ENCODE measurements at regions of chr1 and their contacts with region 1.

Region 1: DNA sequence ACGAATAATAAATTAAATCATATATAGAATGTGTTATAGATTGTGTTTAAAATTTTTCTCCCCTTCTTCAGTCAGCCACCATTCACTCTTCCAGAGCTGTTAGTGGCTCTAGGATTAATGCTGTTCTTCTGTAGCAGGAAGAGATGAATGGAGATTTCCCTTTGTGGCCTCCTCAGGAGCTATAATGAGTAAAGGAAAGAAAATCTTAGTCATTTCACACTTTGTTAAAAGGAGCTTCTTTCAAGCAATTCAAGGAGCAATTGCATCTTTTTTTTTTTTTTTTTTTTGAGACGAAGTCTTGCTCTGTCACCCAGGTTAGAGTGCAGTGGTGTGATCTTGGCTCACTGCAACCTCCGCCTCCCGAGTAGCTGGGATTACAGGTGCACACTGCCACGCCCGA is 23.7 kb upstream of the TMCO2 start:
- DNase-seq: no peak
- ATAC-seq: no peak
- H3K4me3 ChIP-seq: no peak overlapping the region
- H3K27ac ChIP-seq: no peak overlapping the region
- H3K4me1 ChIP-seq: no peaks in the 10 kb centered on the region
- H3K27me3 ChIP-seq: no peaks in the 10 kb centered on the region
- CTCF ChIP-seq: no peak

Region 2: GRCh38 chr1:39575191-39576015 is 648.6 kb before region 1 on chr1:
- intact Hi-C with region 1: loop called in 1 of 10 experiments (anchors 5 kb)
- DNase-seq: peak; percentile 58 to 73
- ATAC-seq: peak; percentile 43 to 79 (median 68)
- H3K4me3 ChIP-seq: peak overlapping the region; percentile 72 to 94 (median 83)
- H3K27ac ChIP-seq: peak overlapping the region; percentile 63 to 96 (median 94)
- H3K4me1 ChIP-seq: peaks cover 4 to 48% (median 36%) of the 10 kb centered on the region in 9 donors
- H3K27me3 ChIP-seq: no peaks in the 10 kb centered on the region
- CTCF ChIP-seq: no peak

Region 3: DNA sequence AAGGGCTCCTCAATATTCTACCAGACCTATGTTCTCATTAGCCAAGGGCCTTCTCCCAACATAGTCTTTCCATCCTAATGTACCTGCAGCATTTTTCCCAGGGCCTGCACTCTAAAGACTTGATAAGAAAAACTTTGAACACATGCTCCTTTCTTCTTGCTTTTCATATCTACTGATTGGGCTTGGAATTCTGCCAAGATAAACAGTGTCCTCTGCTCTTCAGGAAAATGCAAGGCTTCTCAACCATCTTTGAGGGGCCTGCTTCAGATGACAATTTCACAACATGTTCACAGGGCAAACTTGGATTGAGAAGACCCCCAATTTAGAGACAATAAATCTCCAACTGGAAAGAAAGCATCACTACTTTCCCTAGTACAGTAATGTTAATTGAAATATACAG is 101.2 kb before region 1 on chr1:
- intact Hi-C with region 1: no loop called
- DNase-seq: no peak
- ATAC-seq: no peak
- H3K4me3 ChIP-seq: no peak overlapping the region
- H3K27ac ChIP-seq: no peak overlapping the region
- H3K4me1 ChIP-seq: no peaks in the 10 kb centered on the region
- H3K27me3 ChIP-seq: peaks cover 0 to 41% (median 6%) of the 10 kb centered on the region in 7 donors
- CTCF ChIP-seq: no peak

Measured in heart right ventricle (tissue), 16 donors.